Activated CD4-positive, alpha-beta memory T cell treated with anti-CD3 and anti-CD28 coated beads, Interleukin-2, amount 10 ng/mL, durations not matched to agents 7 days and 5 days (primary cell): ENCODE measurements at regions of chr13 and their contacts with region 1.

Region 1: DNA sequence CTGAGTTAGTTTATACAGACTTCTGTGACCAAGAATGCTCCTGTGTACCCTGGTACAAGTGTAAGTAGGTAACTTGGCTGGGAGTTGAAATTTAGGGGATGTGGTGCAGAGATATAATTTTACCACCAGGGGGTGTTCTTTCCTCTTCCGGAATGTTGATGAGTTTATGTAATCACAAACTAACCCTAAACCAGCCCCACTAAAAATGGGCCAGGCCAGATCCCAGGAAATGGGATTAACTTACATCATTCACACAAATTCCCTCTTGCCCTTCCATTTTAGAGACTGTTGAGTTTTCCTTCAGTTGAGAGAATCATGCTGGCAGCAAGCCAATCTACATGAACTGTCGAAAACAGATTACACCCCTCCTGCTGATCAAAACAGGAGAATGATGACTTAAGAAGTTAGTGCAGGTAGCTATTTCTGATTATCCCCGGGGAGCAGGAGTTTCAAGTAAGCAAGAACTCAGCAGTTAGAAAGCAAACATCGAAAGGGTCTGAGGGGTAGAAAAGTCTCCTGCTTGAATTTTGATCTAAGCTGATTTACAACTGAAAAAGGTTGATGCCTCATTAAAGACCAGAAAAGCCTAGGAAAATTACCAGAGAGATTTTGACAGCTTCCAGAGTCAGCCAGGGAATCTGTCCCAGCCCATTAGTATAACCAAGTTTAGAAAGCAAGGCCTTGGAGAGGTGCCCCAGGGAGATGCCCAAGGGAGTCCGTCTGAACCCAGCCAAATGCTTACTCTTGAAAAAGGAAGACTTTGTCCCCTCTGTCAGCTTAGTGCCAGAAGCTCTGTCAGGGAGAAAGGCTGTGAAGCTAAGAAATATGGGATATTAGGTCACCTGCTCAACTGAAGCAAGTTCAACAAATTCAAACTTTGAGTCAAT is 32.3 kb upstream of the MED4 start:
- DNase-seq: peak; percentile 27
- H3K4me3 Mint-ChIP-seq: no peak overlapping the region
- H3K27ac Mint-ChIP-seq: no peak overlapping the region
- H3K4me1 Mint-ChIP-seq: peaks cover 11% of the 10 kb centered on the region
- H3K27me3 Mint-ChIP-seq: peaks cover 3% of the 10 kb centered on the region

Region 2: GRCh38 chr13:47955836-47956235 is 171.4 kb before region 1 on chr13:
- CTCF ChIA-PET with region 1: no interaction called
- POLR2A ChIA-PET with region 1: no interaction called
- DNase-seq: no peak
- H3K4me3 Mint-ChIP-seq: no peak overlapping the region
- H3K27ac Mint-ChIP-seq: no peak overlapping the region
- H3K4me1 Mint-ChIP-seq: no peaks in the 10 kb centered on the region
- H3K27me3 Mint-ChIP-seq: no peaks in the 10 kb centered on the region

Region 3: DNA sequence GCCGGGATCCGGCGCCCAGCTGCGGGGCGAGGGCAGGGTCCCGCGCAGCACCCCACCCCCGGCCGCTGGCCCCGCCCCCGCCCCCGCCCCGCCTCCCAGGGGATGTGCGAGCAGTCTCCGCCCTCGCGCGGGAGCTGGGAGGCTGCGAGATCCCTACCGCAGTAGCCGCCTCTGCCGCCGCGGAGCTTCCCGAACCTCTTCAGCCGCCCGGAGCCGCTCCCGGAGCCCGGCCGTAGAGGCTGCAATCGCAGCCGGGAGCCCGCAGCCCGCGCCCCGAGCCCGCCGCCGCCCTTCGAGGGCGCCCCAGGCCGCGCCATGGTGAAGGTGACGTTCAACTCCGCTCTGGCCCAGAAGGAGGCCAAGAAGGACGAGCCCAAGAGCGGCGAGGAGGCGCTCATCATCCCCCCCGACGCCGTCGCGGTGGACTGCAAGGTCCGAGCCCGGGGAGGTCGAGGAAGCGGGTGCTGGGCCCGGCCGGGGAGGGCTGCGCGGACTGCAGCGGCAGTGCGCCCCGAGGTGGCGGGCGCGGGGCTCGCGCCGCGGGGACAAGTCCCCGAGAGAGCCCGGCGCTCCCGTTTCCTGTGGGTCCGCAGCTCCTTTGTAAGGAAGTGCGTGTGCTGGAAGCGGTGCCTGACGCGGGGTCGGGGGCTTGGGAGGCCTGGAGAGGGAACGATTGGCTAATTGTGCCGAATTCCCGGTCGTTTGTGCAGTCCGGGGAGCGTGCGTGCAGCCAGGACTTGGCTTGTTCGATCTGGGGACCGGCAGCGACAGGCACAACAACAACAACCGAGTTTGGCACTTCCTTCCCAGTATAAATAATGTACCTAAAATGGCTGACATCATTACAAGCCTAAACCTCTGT is 106.1 kb after region 1 on chr13 and contains the start of gene ITM2B:
- CTCF ChIA-PET with region 1: interaction called, 9 read pairs
- POLR2A ChIA-PET with region 1: interaction called, 18 read pairs
- DNase-seq: peak; percentile 65
- H3K4me3 Mint-ChIP-seq: peak within 1 kb of the TSS; percentile 90
- H3K27ac Mint-ChIP-seq: peak within 1 kb of the TSS; percentile 86
- H3K4me1 Mint-ChIP-seq: peaks cover 40% of the 10 kb centered on the region
- H3K27me3 Mint-ChIP-seq: peaks cover 31% of the 10 kb centered on the region
- total RNA-seq, gene ITM2B: 226 to 227 TPM

Region 4: GRCh38 chr13:48334534-48335127 is 207.4 kb after region 1 on chr13:
- CTCF ChIA-PET with region 1: interaction called, 13 read pairs
- POLR2A ChIA-PET with region 1: no interaction called
- DNase-seq: no peak
- H3K4me3 Mint-ChIP-seq: no peak overlapping the region
- H3K27ac Mint-ChIP-seq: no peak overlapping the region
- H3K4me1 Mint-ChIP-seq: peaks cover 18% of the 10 kb centered on the region
- H3K27me3 Mint-ChIP-seq: no peaks in the 10 kb centered on the region